Activated CD8-positive, alpha-beta T cell treated with anti-CD3 and anti-CD28 coated beads for 36 hours (primary cell): ENCODE measurements at regions of chr20 and their contacts with region 1.

Region 1: DNA sequence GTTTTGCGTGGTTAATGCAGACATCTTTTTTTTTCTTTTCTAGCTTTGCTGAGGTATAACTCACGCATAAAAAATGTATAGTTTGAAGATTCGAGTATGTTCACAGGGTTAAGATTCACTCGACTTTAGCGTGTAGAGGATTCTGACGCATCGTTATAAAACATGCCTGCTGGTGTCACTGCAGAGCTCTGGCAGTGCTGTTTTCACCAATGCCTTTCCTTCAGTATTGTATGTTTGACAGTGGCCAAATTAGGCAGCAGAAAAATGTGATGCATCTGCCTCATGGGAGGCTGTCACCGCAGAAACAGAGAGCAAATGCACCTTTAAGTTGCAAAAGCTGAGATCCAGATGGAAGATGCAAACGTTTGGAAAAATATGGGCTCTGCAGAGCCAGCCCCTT is 18.0 kb upstream of the SIRPB2 start:
- DNase-seq: peak; percentile 58
- ATAC-seq: peak; percentile 74
- H3K4me3 Mint-ChIP-seq: no peak overlapping the region
- H3K27ac Mint-ChIP-seq: no peak overlapping the region
- H3K4me1 Mint-ChIP-seq: no peaks in the 10 kb centered on the region
- H3K27me3 Mint-ChIP-seq: peaks cover 8% of the 10 kb centered on the region
- CTCF ChIP-seq: peak; percentile 32

Region 2: DNA sequence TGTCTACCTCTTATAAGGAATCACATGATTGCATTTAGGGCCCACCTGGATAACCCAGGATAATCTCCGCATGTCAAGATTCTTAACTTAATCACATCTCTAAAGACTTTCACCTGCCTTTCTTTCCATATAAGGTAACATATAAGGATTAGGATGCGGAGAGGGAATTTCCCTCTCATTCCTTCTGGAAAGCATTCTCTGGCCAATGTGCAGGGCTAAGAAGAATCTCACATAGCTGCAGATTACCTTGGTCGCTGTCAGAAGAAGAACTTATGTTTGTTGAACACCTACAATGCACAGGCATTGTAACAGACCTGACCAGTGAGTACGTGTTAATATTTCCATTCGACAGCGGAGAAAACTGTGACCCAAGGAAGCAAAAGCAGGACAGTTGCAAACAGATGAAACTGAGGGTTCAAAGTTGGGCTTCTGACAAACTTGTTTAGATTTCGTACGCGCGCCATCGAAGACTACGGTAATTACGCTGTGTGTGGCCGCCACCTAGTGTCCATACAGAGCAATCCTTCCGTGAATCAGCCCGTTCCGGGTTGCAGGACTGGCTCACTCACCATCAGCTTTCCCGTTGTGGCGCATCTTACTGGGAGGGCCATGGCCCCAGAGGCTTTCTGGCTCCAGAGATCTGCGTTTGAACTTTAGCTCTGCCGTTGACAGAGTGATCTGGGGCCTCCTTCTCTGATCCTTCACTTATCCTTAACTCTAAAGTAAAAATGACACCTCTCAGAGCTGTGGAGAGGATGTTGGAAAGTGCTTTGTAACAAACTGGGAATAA is 296.4 kb before region 1 on chr20:
- CTCF ChIA-PET with region 1: no interaction called
- POLR2A ChIA-PET with region 1: no interaction called
- intact Hi-C with region 1: no loop called
- DNase-seq: peak; percentile 86
- ATAC-seq: peak; percentile 76
- H3K4me3 Mint-ChIP-seq: no peak overlapping the region
- H3K27ac Mint-ChIP-seq: no peak overlapping the region
- H3K4me1 Mint-ChIP-seq: peaks cover 33% of the 10 kb centered on the region
- H3K27me3 Mint-ChIP-seq: peaks cover 5% of the 10 kb centered on the region
- CTCF ChIP-seq: peak; percentile 91

Region 3: DNA sequence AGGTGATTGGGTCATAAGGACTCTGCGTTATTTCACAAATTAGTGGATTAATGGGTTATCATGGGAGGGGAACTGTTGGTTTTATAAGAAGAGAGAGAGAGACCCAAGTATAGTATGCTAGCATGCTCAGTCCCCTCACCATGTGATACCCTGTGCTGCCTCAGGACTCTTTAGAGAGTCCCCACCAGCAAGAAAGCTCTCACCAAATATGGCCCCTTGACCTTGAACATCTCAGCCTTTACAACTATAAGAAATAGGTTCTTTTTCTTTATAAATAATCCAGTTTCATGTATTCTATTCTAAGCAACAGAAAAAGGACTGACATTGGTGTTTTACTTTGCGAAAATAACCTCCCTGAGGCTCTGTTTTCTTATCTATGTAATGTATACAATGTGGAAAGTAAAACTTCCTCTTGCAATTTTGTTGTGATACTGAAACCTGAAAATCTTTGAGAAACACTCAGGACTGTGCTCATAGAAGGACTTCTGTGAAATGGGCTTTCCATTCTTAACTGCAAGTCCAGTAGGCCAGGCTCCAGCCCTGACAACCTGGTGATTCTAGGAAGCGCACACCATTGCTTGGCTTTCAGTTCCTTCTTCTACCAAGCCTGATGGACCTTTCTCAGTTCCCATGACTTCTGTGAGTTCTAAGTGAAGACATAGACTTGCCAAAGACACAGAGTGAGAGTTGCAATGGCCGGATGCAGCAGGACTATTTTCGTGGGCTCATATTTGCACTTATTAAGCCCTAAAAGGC is 26.4 kb after region 1 on chr20:
- CTCF ChIA-PET with region 1: interaction called, 17 read pairs
- POLR2A ChIA-PET with region 1: no interaction called
- intact Hi-C with region 1: no loop called
- DNase-seq: no peak
- ATAC-seq: no peak
- H3K4me3 Mint-ChIP-seq: no peak overlapping the region
- H3K27ac Mint-ChIP-seq: no peak overlapping the region
- H3K4me1 Mint-ChIP-seq: peaks cover 11% of the 10 kb centered on the region
- H3K27me3 Mint-ChIP-seq: no peaks in the 10 kb centered on the region
- CTCF ChIP-seq: no peak